Colonic mucosa (tissue), 4 donors: ENCODE measurements at regions of chr2 and their contacts with region 1.

Region 1: DNA sequence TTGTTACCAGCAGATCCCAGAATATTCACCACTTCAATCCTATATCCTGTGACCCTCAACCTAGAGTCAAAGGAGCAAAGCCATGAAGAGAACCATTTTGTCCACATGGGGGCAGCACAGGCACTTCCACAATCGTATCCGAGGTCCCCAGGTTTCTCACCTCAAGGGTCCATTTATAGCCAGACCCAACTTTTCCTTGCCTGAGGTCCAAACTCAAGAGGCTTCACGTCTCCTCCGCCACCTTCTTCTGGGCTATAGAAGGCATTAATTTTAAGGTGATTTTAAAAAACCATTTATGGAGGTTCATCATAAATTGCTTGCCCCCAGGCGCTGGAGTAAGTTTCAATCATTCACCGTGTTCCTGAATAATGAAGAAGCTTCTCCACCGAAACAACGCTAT is 111.6 kb upstream of the NABP1 start:
- DNase-seq: peak; percentile 70
- H3K4me3 ChIP-seq: no peak overlapping the region
- H3K27ac ChIP-seq: no peak overlapping the region
- H3K4me1 ChIP-seq: no peaks in the 10 kb centered on the region
- H3K27me3 ChIP-seq: no peaks in the 10 kb centered on the region
- CTCF ChIP-seq: peak; percentile 63

Region 2: GRCh38 chr2:191666732-191667131 is 100.4 kb after region 1 on chr2:
- intact Hi-C with region 1: no loop called
- DNase-seq: no peak
- H3K4me3 ChIP-seq: no peak overlapping the region
- H3K27ac ChIP-seq: no peak overlapping the region
- H3K4me1 ChIP-seq: no peaks in the 10 kb centered on the region
- H3K27me3 ChIP-seq: no peaks in the 10 kb centered on the region
- CTCF ChIP-seq: no peak

Region 3: GRCh38 chr2:191691016-191691735 is 124.8 kb after region 1 on chr2:
- intact Hi-C with region 1: loop called (anchors 2 kb)
- DNase-seq: peak; percentile 64
- H3K4me3 ChIP-seq: no peak overlapping the region
- H3K27ac ChIP-seq: no peak overlapping the region
- H3K4me1 ChIP-seq: no peaks in the 10 kb centered on the region
- H3K27me3 ChIP-seq: no peaks in the 10 kb centered on the region
- CTCF ChIP-seq: peak; percentile 77

Region 4: GRCh38 chr2:191701696-191702095 is 135.4 kb after region 1 on chr2:
- intact Hi-C with region 1: no loop called
- DNase-seq: no peak
- H3K4me3 ChIP-seq: no peak overlapping the region
- H3K27ac ChIP-seq: no peak overlapping the region
- H3K4me1 ChIP-seq: no peaks in the 10 kb centered on the region
- H3K27me3 ChIP-seq: no peaks in the 10 kb centered on the region
- CTCF ChIP-seq: no peak

Region 5: GRCh38 chr2:191758518-191759507 is 192.5 kb after region 1 on chr2:
- intact Hi-C with region 1: no loop called
- DNase-seq: peak; percentile 42
- H3K4me3 ChIP-seq: no peak overlapping the region
- H3K27ac ChIP-seq: no peak overlapping the region
- H3K4me1 ChIP-seq: no peaks in the 10 kb centered on the region
- H3K27me3 ChIP-seq: no peaks in the 10 kb centered on the region
- CTCF ChIP-seq: peak; percentile 35